A673 (cell line): ENCODE measurements at regions of chr3 and their contacts with region 1.

Region 1: DNA sequence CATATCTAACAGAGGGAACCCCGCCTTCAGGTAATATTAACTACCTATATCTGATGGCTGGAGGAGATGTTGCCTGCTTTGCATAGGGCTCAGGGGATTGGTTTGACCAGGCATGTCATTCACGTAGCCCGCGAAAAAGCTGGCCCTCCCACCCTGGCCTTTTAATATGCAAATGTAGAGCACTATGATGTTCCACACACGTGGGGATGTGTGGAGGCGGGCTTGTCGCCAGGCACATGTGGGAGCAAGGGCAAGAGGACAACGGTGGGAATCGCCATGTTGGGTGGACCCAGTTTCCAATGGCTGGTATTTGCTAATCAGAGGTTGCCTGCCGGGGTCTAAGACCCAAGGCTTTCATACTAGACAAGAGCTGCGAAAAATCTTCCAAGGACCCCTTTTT is 469.8 kb downstream of the ZPLD1 start:
- DNase-seq: no peak
- H3K4me3 ChIP-seq: no peak overlapping the region
- H3K27ac ChIP-seq: no peak overlapping the region
- H3K4me1 ChIP-seq: no peaks in the 10 kb centered on the region
- H3K27me3 ChIP-seq: no peaks in the 10 kb centered on the region
- CTCF ChIP-seq: no peak

Region 2: DNA sequence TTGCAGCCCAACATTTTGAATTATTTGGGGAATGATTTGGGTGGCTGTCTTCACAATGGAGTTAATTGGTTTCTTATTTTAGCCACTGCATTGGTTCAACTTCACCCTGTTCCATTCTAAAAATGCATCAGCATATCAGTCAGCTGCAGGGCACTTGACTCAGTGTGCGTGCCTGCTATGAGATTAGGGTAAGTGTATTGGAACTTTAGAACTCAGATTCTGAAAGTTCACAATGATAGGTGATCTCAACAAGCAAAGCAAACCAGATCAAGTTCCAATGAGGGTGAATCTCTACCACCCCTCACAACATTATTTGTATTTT is 204.8 kb before region 1 on chr3:
- CTCF ChIA-PET with region 1: no interaction called
- POLR2A ChIA-PET with region 1: interaction called, 10 read pairs
- intact Hi-C with region 1: no loop called
- DNase-seq: no peak
- H3K4me3 ChIP-seq: no peak overlapping the region
- H3K27ac ChIP-seq: no peak overlapping the region
- H3K4me1 ChIP-seq: no peaks in the 10 kb centered on the region
- H3K27me3 ChIP-seq: no peaks in the 10 kb centered on the region
- CTCF ChIP-seq: no peak